ENCODE measurements at regions of chr2 and their contacts with region 1.

Region 1: DNA sequence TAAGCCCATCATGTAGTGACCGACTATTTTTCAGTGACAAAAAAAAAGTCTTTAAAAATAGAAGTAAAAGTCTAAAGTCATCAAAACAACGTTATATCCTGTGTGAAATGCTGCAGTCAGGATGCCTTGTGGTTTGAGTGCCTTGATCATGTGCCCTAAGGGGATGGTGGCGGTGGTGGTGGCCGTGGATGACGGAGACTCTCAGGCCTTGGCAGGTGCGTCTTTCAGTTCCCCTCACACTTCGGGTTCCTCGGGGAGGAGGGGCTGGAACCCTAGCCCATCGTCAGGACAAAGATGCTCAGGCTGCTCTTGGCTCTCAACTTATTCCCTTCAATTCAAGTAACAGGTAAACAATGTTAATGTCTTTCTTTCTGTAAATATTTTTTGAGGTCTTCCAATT is at the start of gene CD28:
- DNase-seq: peak; percentile 59 to 96 (median 94)
- ATAC-seq: peak; percentile 90
- H3K4me3 ChIP-seq: peak within 1 kb of the TSS; percentile 70
- H3K4me3 Mint-ChIP-seq: peak within 1 kb of the TSS; percentile 82 to 97 (median 94)
- H3K27ac ChIP-seq: peak within 1 kb of the TSS; percentile 95
- H3K27ac Mint-ChIP-seq: peak within 1 kb of the TSS; percentile 92 to 99 (median 97)
- H3K4me1 ChIP-seq: peaks cover 30 to 39% of the 10 kb centered on the region in 2 donors
- H3K4me1 Mint-ChIP-seq: peaks cover 13 to 50% (median 41%) of the 10 kb centered on the region in 7 donors
- H3K27me3 ChIP-seq: no peaks in the 10 kb centered on the region
- H3K27me3 Mint-ChIP-seq: no peaks in the 10 kb centered on the region
- total RNA-seq, gene CD28: 66.7 to 224 (median 121) TPM

Region 2: DNA sequence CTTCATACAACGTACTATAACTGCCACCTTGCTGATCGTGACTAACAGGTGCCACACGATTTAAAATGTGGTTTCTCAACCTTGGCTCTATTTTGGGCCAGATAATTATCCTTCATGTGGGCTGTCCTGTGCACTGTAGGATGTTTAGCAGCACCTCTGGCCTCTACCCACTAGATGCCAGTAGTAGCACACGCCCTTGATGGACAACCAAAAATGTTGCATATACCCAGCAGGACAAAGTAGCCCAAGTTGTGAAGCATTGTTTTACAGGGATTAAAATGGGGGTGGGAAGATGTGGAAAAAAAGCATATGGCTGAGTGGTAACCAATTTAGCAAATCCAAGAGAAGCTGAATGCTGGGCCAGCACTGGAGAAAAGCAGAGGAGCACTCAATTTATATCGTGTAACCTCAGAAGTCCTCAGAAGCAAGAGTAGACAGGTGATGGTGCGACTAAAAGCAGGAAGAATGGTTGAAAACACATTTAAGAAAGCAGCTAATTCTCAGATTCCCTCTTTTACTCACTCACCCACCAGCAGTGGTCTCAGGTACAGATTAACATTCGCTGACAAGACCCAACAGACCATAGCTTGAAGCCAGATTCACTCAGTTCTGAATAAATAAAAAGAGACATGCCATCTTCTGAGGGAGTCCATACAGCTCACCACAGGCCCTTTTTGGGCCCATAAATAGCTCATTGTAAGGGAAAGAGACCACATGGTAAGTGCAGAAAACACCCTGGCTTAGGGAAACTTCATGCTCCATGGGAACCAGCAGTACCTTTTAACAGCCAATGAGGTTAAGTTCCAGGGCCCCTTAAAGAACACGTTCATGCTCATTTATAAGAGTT is 221.9 kb before region 1 on chr2:
- CTCF ChIA-PET with region 1: no interaction called
- POLR2A ChIA-PET with region 1: interaction called, 3 read pairs
- intact Hi-C with region 1: loop called in 1 of 2 experiments (anchors 1 kb)
- DNase-seq: peak in 8 of 9 donors; percentile 20 to 69 (median 60)
- ATAC-seq: peak; percentile 92
- H3K4me3 ChIP-seq: no peak overlapping the region
- H3K4me3 Mint-ChIP-seq: peak overlapping the region in 5 of 10 donors; percentile 2 to 38 (median 14)
- H3K27ac ChIP-seq: no peak overlapping the region
- H3K27ac Mint-ChIP-seq: peak overlapping the region in 7 of 9 donors; percentile 3 to 88 (median 24)
- H3K4me1 ChIP-seq: peaks cover 0 to 7% of the 10 kb centered on the region in 2 donors
- H3K4me1 Mint-ChIP-seq: peaks cover 2 to 9% (median 7%) of the 10 kb centered on the region in 7 donors
- H3K27me3 ChIP-seq: no peaks in the 10 kb centered on the region
- H3K27me3 Mint-ChIP-seq: no peaks in the 10 kb centered on the region

Region 3: GRCh38 chr2:203599509-203599908 is 106.9 kb before region 1 on chr2:
- CTCF ChIA-PET with region 1: no interaction called
- POLR2A ChIA-PET with region 1: no interaction called
- intact Hi-C with region 1: loop called (anchors 5 kb)
- DNase-seq: no peak
- ATAC-seq: no peak
- H3K4me3 ChIP-seq: no peak overlapping the region
- H3K4me3 Mint-ChIP-seq: peak overlapping the region in 1 of 10 donors; percentile 35
- H3K27ac ChIP-seq: no peak overlapping the region
- H3K27ac Mint-ChIP-seq: no peak overlapping the region
- H3K4me1 ChIP-seq: no peaks in the 10 kb centered on the region
- H3K4me1 Mint-ChIP-seq: peaks cover 0 to 36% (median 4%) of the 10 kb centered on the region in 7 donors
- H3K27me3 ChIP-seq: no peaks in the 10 kb centered on the region
- H3K27me3 Mint-ChIP-seq: peaks cover 0 to 56% (median 5%) of the 10 kb centered on the region in 5 donors

Region 4: DNA sequence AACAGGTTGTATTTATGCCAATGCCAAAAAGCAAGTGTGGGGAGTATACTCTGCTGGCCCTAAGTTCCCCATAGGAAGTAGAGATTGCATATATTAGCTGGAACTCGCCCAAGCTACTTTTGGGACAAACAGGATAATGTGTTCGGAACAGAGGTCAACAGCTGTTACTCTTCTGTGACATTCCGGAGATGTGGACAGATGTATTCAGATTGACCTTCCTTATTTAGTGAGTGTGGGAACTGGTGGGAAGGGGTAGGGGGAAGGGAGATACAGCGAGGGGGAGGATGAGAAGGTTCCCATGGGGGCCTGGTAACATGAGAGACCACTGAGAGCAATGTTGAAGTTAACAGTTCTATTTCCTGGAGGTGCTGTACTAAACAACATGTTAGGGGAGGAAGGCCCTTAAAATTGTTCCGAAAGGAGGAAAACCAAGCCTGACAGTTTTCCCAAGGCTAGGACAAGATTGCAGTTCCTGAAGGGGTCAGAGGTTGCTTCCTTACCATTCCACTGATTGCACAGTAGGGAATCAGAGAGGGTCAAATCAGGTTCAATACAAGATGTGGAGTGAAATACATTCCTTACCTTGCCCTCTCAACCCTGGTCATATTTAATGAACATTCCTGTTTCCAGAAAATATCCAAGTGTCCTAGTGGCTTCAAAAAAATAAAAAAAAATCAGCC is 14.2 kb before region 1 on chr2:
- CTCF ChIA-PET with region 1: interaction called, 3 read pairs
- POLR2A ChIA-PET with region 1: interaction called, 11 read pairs
- intact Hi-C with region 1: loop called in 1 of 2 experiments (anchors 1 kb)
- DNase-seq: no peak
- ATAC-seq: no peak
- H3K4me3 ChIP-seq: no peak overlapping the region
- H3K4me3 Mint-ChIP-seq: no peak overlapping the region
- H3K27ac ChIP-seq: no peak overlapping the region
- H3K27ac Mint-ChIP-seq: peak overlapping the region in 1 of 9 donors; percentile 10
- H3K4me1 ChIP-seq: peaks cover 0 to 10% of the 10 kb centered on the region in 2 donors
- H3K4me1 Mint-ChIP-seq: peaks cover 4 to 39% (median 25%) of the 10 kb centered on the region in 7 donors
- H3K27me3 ChIP-seq: no peaks in the 10 kb centered on the region
- H3K27me3 Mint-ChIP-seq: no peaks in the 10 kb centered on the region

Region 5: DNA sequence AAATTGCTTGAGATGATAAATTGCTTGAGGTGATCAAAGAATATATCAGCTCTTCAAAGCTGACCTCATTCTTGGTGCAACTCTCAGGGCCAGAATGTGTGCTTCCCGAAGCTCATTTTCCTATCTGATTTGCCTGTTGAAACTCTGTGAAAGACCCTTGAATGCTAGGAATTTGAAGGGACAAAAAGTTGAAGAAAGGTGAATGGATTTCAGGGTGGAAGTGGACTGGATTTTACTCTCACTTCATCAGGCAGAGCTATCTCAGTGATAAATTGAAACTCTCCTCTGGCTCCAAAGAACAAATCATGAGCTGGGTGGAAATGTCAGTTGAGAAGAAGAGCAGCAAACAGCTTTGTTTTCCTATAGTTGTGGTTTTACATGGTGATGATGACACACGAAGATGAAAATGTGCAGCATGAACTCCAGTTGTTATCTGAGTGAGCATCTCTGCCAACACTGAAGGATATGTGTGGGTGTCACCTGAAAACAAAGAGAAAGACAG is 34.4 kb after region 1 on chr2:
- CTCF ChIA-PET with region 1: interaction called, 6 read pairs
- POLR2A ChIA-PET with region 1: interaction called, 187 read pairs
- intact Hi-C with region 1: loop called (anchors 1 kb)
- DNase-seq: peak in 7 of 9 donors; percentile 68 to 94 (median 88)
- ATAC-seq: peak; percentile 93
- H3K4me3 ChIP-seq: no peak overlapping the region
- H3K4me3 Mint-ChIP-seq: peak overlapping the region; percentile 60 to 87 (median 70)
- H3K27ac ChIP-seq: peak overlapping the region; percentile 80
- H3K27ac Mint-ChIP-seq: peak overlapping the region; percentile 79 to 98 (median 96)
- H3K4me1 ChIP-seq: peaks cover 55 to 86% of the 10 kb centered on the region in 2 donors
- H3K4me1 Mint-ChIP-seq: peaks cover 57 to 93% (median 84%) of the 10 kb centered on the region in 7 donors
- H3K27me3 ChIP-seq: no peaks in the 10 kb centered on the region
- H3K27me3 Mint-ChIP-seq: no peaks in the 10 kb centered on the region

Region 6: GRCh38 chr2:203840655-203841205 is 134.3 kb after region 1 on chr2:
- CTCF ChIA-PET with region 1: no interaction called
- POLR2A ChIA-PET with region 1: no interaction called
- intact Hi-C with region 1: no loop called
- DNase-seq: no peak
- ATAC-seq: no peak
- H3K4me3 ChIP-seq: no peak overlapping the region
- H3K4me3 Mint-ChIP-seq: no peak overlapping the region
- H3K27ac ChIP-seq: no peak overlapping the region
- H3K27ac Mint-ChIP-seq: peak overlapping the region in 1 of 9 donors; percentile 63
- H3K4me1 ChIP-seq: no peaks in the 10 kb centered on the region
- H3K4me1 Mint-ChIP-seq: peaks cover 0 to 19% (median 0%) of the 10 kb centered on the region in 7 donors
- H3K27me3 ChIP-seq: no peaks in the 10 kb centered on the region
- H3K27me3 Mint-ChIP-seq: no peaks in the 10 kb centered on the region

Region 7: DNA sequence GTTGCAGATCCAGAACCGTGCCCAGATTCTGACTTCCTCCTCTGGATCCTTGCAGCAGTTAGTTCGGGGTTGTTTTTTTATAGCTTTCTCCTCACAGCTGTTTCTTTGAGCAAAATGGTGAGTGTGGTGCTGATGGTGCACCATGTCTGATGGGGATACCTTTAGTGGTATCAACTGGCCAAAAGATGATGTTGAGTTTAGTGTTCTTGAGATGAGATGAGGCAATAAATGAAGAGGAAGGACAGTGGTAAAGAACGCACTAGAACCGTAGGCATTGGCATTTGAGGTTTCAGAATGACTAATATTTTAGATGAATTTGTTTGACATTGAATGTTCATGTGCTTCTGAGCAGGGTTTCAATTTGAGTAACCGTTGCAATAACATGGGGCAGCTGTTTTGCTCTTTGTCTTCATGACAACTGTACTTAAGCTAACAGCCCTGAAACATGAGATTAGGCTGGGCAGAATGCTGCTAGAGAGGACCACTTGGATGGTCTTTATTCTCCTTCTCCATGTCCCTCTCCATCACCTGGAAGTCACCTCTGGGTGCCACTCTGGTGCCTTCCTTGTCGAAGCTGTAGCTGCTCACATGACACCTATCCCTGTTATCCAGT is 165.1 kb after region 1 on chr2:
- CTCF ChIA-PET with region 1: no interaction called
- POLR2A ChIA-PET with region 1: interaction called, 8 read pairs
- intact Hi-C with region 1: loop called (anchors 1 to 5 kb)
- DNase-seq: peak in 1 of 9 donors; percentile 45
- ATAC-seq: peak; percentile 30
- H3K4me3 ChIP-seq: no peak overlapping the region
- H3K4me3 Mint-ChIP-seq: peak overlapping the region; percentile 55 to 96 (median 77)
- H3K27ac ChIP-seq: peak overlapping the region; percentile 79
- H3K27ac Mint-ChIP-seq: peak overlapping the region; percentile 48 to 99 (median 92)
- H3K4me1 ChIP-seq: peaks cover 56 to 64% of the 10 kb centered on the region in 2 donors
- H3K4me1 Mint-ChIP-seq: peaks cover 44 to 93% (median 80%) of the 10 kb centered on the region in 7 donors
- H3K27me3 ChIP-seq: no peaks in the 10 kb centered on the region
- H3K27me3 Mint-ChIP-seq: no peaks in the 10 kb centered on the region

Measured in naive thymus-derived CD4-positive, alpha-beta T cell (primary cell).